GM12878 (cell line): ENCODE measurements at regions of chr7 and their contacts with region 1.

Region 1: DNA sequence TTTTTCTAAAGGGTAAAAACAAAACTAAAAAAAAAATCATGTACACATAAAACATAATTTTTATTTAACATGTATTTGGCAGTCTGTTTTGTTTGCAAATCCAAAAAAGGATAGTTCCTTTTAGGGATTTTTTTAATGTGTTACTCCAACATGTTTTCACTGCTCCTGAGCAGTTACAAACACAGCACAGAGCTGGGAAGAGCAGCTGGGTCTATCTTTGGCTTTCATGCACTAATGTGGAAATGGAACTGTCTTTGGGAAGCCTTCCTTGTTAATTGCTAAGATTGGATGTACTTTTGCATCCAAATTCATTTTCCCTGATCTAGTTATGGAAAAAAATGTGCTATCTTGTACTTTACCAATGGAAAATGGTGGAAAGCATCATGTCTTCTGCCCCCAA is 1035.1 kb downstream of the CNTNAP2 start:
- DNase-seq: no peak
- ATAC-seq: no peak
- H3K4me3 ChIP-seq: no peak overlapping the region
- H3K27ac ChIP-seq: no peak overlapping the region
- H3K4me1 ChIP-seq: no peaks in the 10 kb centered on the region
- H3K27me3 ChIP-seq: no peaks in the 10 kb centered on the region
- CTCF ChIP-seq: no peak
- EP300 ChIP-seq: no peak
- POLR2A ChIP-seq: no peak
- RAD21 ChIP-seq: no peak

Region 2: DNA sequence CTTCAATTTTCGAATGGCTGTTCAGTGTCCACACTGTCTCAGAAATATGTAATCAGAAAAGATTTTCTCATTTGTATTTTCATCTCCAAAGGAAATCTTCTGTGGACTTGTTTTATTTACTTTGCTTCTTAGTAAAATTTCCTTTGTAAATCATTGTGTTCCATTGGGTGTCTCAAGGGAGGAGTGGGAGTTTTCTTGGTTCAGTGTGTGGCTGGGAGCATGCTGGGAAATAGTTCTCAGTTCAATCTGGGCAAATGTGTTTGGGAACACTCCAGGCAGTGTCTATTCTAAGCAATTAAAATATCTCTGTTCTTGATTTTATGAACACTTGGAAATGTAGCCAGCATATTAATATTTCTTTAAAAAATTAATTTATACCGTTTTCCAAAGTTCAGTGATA is 15.3 kb before region 1 on chr7:
- CTCF ChIA-PET with region 1: no interaction called
- POLR2A ChIA-PET with region 1: interaction called, 3 read pairs
- RAD21 ChIA-PET with region 1: no interaction called
- SMC1A ChIA-PET with region 1: no interaction called
- in situ Hi-C with region 1: no loop called
- intact Hi-C with region 1: loop called (anchors 1 kb)
- DNase-seq: no peak
- ATAC-seq: no peak
- H3K4me3 ChIP-seq: no peak overlapping the region
- H3K27ac ChIP-seq: no peak overlapping the region
- H3K4me1 ChIP-seq: no peaks in the 10 kb centered on the region
- H3K27me3 ChIP-seq: no peaks in the 10 kb centered on the region
- CTCF ChIP-seq: no peak
- EP300 ChIP-seq: no peak
- POLR2A ChIP-seq: no peak
- RAD21 ChIP-seq: no peak